PC-3 (cell line): ENCODE measurements at regions of chr14 and their contacts with region 1.

Region 1: DNA sequence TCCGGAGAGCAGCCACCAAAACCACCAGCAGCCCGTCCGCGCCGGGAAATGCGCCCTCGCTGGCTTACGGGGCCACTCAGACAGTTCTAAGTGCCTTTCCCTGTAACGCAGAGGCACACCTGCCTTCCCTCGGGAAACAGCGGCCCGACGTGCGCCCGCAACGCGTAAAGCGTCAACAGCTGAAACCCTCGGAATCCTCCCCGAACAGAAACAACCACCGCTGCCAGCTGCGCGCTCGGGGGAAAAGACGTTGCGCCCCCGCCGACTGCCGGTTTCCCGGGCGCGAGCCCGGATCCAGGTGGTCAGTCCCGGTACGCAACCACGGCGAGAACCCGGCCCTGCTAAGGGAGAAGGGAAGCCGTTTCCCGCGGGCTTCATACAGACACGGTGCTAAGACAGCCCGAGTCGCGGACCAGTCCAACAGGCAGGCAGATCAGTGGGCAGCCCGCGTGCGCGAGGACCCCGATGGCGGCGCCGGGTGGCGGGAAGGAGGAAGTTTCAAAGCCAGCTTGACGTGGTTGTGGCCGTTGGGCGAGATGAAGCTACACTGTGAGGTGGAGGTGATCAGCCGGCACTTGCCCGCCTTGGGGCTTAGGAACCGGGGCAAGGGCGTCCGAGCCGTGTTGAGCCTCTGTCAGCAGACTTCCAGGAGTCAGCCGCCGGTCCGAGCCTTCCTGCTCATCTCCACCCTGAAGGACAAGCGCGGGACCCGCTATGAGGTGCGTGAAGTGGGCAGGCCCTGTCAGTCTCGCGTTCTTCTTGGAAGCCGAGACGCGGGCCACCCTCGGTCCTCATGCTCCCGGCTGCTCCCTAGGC is at the start of gene LRR1:
- DNase-seq: peak; percentile 79
- ATAC-seq: peak; percentile 63
- H3K4me3 ChIP-seq: peak within 1 kb of the TSS; percentile 94
- H3K27ac ChIP-seq: peak within 1 kb of the TSS; percentile 82
- H3K4me1 ChIP-seq: peaks cover 29% of the 10 kb centered on the region
- H3K27me3 ChIP-seq: no peaks in the 10 kb centered on the region
- CTCF ChIP-seq: no peak
- total RNA-seq, gene LRR1: 46.9 and 53.0 TPM in 2 replicates

Region 2: GRCh38 chr14:49585803-49586672 is 12.7 kb before region 1 on chr14 and contains the start of gene RPS29:
- CTCF ChIA-PET with region 1: interaction called, 5 read pairs
- POLR2A ChIA-PET with region 1: interaction called, 10 read pairs
- intact Hi-C with region 1: no loop called
- DNase-seq: peak; percentile 100
- ATAC-seq: peak; percentile 89
- H3K4me3 ChIP-seq: peak within 1 kb of the TSS; percentile 93
- H3K27ac ChIP-seq: peak within 1 kb of the TSS; percentile 59
- H3K4me1 ChIP-seq: peaks cover 20% of the 10 kb centered on the region
- H3K27me3 ChIP-seq: no peaks in the 10 kb centered on the region
- CTCF ChIP-seq: no peak
- total RNA-seq, gene RPS29: 1,420 and 1,912 TPM in 2 replicates

Region 3: DNA sequence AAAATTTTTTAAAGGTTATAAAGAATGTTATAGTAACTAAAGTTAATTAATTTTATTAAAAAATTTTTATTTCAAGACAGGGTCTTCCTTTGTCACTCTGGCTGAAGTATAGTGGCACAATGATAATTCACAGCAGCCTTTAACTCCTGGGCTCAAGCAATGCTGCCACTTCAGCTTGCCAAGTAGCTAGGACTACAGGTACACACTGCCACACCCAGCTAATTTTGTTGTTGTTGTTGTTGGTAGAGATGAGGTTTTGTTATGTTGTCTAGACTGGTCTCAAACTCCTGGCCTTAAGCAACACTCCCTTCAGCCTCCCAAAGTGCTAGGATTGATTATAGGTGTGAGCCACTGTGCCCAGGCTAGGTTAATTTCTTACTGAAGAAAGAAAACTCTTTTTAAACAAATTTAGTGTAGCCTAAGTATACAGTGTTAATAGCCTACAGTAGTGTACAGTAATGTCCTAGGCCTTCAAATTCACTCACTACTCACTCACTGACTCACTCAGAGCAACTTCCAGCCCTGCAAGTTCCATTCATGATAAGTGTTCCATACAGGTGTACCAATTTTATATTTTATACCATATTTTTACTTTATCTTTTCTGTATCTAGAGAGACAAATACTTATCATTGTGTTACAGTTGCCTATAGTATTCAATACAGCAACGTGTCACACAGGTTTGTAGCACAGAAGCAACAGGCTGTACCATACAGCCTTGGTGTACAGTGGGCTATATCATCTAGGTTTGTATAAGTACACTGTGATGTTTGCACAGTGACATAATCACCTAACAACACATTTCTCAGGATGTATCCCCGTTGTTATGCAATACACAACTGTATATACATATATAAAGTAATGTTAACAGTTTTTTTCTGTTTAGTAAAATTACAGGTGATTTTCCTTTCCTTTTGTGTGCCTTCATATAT is 61.1 kb after region 1 on chr14:
- CTCF ChIA-PET with region 1: no interaction called
- POLR2A ChIA-PET with region 1: no interaction called
- intact Hi-C with region 1: no loop called
- DNase-seq: peak; percentile 92
- ATAC-seq: peak; percentile 92
- H3K4me3 ChIP-seq: 0 out of 2 replicates have a peak overlapping the region, but pooled peaks have one; percentile 19
- H3K27ac ChIP-seq: peak overlapping the region; percentile 94
- H3K4me1 ChIP-seq: peaks cover 43% of the 10 kb centered on the region
- H3K27me3 ChIP-seq: no peaks in the 10 kb centered on the region
- CTCF ChIP-seq: no peak